Activated CD8-positive, alpha-beta T cell treated with anti-CD3 and anti-CD28 coated beads for 36 hours (primary cell): ENCODE measurements at regions of chr6 and their contacts with region 1.

Region 1: GRCh38 chr6:30556066-30556905 is at the start of gene GNL1:
- DNase-seq: peak; percentile 100
- ATAC-seq: peak; percentile 93
- H3K4me3 Mint-ChIP-seq: peak within 1 kb of the TSS; percentile 91
- H3K27ac Mint-ChIP-seq: peak within 1 kb of the TSS; percentile 99
- H3K4me1 Mint-ChIP-seq: peaks cover 35% of the 10 kb centered on the region
- H3K27me3 Mint-ChIP-seq: no peaks in the 10 kb centered on the region
- CTCF ChIP-seq: no peak
- total RNA-seq, gene GNL1: 107 to 122 TPM

Region 2: GRCh38 chr6:30357678-30358540 is 198.4 kb before region 1 on chr6:
- CTCF ChIA-PET with region 1: no interaction called
- POLR2A ChIA-PET with region 1: no interaction called
- intact Hi-C with region 1: no loop called
- DNase-seq: peak; percentile 74
- ATAC-seq: peak; percentile 88
- H3K4me3 Mint-ChIP-seq: peak overlapping the region; percentile 75
- H3K27ac Mint-ChIP-seq: no peak overlapping the region
- H3K4me1 Mint-ChIP-seq: peaks cover 1% of the 10 kb centered on the region
- H3K27me3 Mint-ChIP-seq: peaks cover 41% of the 10 kb centered on the region
- CTCF ChIP-seq: peak; percentile 87

Region 3: DNA sequence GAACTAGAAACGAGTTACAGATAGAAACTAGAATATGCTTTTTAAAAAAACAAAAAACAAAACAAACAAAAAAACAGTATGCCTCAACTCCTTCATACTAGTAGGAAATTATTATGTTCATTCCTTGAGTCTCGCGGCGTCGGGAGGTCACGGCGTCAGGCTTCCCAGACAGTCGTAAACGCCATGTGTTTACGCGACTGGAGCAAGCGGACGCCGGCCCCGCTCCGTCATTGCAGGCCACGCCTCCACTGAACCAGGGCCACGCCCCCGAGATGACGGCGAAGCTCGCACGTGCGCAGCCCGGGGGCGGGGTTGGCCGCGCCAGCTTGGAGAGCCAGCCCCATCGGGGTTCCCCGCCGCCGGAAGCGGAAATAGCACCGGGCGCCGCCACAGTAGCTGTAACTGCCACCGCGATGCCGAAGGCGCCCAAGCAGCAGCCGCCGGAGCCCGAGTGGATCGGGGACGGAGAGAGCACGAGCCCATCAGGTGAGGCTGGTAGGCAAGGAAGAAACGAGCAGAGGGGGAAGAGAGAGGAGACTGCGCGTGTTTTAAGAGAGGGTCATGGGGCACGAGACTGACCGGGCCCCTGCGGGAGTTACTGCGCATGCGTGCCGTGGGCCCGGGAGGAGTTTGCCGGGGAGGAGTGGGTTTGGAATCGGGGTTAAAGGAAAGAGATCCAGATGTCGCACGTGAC is 14.9 kb after region 1 on chr6 and contains the start of gene ABCF1:
- CTCF ChIA-PET with region 1: interaction called, 4 read pairs
- POLR2A ChIA-PET with region 1: interaction called, 34 read pairs
- intact Hi-C with region 1: no loop called
- DNase-seq: peak; percentile 99
- ATAC-seq: peak; percentile 92
- H3K4me3 Mint-ChIP-seq: peak within 1 kb of the TSS; percentile 86
- H3K27ac Mint-ChIP-seq: peak within 1 kb of the TSS; percentile 96
- H3K4me1 Mint-ChIP-seq: peaks cover 63% of the 10 kb centered on the region
- H3K27me3 Mint-ChIP-seq: no peaks in the 10 kb centered on the region
- CTCF ChIP-seq: no peak
- total RNA-seq, gene ABCF1: 86.9 to 88.0 TPM